ENCODE measurements at regions of chr7 and their contacts with region 1.

Region 1: DNA sequence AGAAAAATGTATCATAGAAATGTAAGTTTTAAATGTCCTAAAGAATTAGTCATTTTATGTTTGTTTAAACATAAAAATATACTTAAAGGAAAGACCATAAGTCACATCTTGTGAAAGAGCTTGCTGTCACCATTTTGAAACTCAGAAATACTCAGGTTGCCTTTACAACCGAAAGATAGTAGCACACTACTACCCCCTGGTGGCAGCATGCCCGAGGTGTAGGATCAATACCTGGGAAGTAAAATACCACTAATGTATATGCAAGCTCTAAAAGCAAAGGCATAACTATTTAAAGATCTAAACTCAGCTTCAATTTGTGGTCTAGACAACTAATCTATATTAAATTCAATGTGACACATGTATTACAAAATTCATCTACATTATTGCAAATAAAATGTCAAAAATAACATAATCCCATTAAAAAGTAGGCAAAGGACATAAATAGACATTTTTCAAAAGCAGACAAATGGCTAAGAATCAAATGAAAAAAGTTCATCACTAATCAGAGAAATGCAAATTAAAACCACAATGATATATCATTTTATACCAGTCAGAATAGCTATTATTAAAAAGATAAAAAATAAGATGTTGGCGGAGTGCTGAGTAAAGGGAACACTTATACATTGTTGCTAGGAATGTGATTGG is 47.7 kb upstream of the FGL2 start:
- DNase-seq: peak; percentile 71
- ATAC-seq: peak; percentile 91
- H3K4me3 ChIP-seq: no peak overlapping the region
- H3K27ac ChIP-seq: no peak overlapping the region
- H3K4me1 ChIP-seq: no peaks in the 10 kb centered on the region
- H3K27me3 ChIP-seq: no peaks in the 10 kb centered on the region
- CTCF ChIP-seq: peak; percentile 59 to 88 (median 83); a peak in 5 of 6 replicates
- POLR2A ChIP-seq: no peak
- RAD21 ChIP-seq: peak; percentile 70

Region 2: GRCh38 chr7:77331938-77332695 is 84.8 kb after region 1 on chr7:
- CTCF ChIA-PET with region 1: interaction called, 20 read pairs
- POLR2A ChIA-PET with region 1: no interaction called
- RAD21 ChIA-PET with region 1: interaction called, 3 to 5 read pairs
- intact Hi-C with region 1: loop called (anchors 5 kb)
- DNase-seq: peak; percentile 87
- ATAC-seq: peak; percentile 98
- H3K4me3 ChIP-seq: no peak overlapping the region
- H3K27ac ChIP-seq: no peak overlapping the region
- H3K4me1 ChIP-seq: peaks cover 0 to 18% of the 10 kb centered on the region in 2 experiments; a peak in 2 of 4 replicates
- H3K27me3 ChIP-seq: no peaks in the 10 kb centered on the region
- CTCF ChIP-seq: peak; percentile 61 to 76 (median 72)
- POLR2A ChIP-seq: no peak
- RAD21 ChIP-seq: peak; percentile 91